H1 (cell line): ENCODE measurements at regions of chr7 and their contacts with region 1.

Region 1: GRCh38 chr7:134374291-134374690 is 57.6 kb upstream of the SLC35B4 start:
- DNase-seq: no peak
- H3K4me3 ChIP-seq: no peak overlapping the region
- H3K27ac ChIP-seq: no peak overlapping the region
- H3K4me1 ChIP-seq: no peaks in the 10 kb centered on the region
- H3K27me3 ChIP-seq: no peaks in the 10 kb centered on the region
- CTCF ChIP-seq: no peak
- EP300 ChIP-seq: no peak
- POLR2A ChIP-seq: no peak
- RAD21 ChIP-seq: no peak

Region 2: GRCh38 chr7:134234216-134234615 is 140.1 kb before region 1 on chr7:
- CTCF ChIA-PET with region 1: no interaction called
- POLR2A ChIA-PET with region 1: no interaction called
- DNase-seq: no peak
- H3K4me3 ChIP-seq: no peak overlapping the region
- H3K27ac ChIP-seq: no peak overlapping the region
- H3K4me1 ChIP-seq: no peaks in the 10 kb centered on the region
- H3K27me3 ChIP-seq: no peaks in the 10 kb centered on the region
- CTCF ChIP-seq: no peak
- EP300 ChIP-seq: no peak
- POLR2A ChIP-seq: no peak
- RAD21 ChIP-seq: no peak

Region 3: GRCh38 chr7:134254311-134254710 is 120.0 kb before region 1 on chr7:
- CTCF ChIA-PET with region 1: no interaction called
- POLR2A ChIA-PET with region 1: no interaction called
- DNase-seq: no peak
- H3K4me3 ChIP-seq: no peak overlapping the region
- H3K27ac ChIP-seq: no peak overlapping the region
- H3K4me1 ChIP-seq: no peaks in the 10 kb centered on the region
- H3K27me3 ChIP-seq: no peaks in the 10 kb centered on the region
- CTCF ChIP-seq: peak in 2 of 3 experiments; percentile 26 to 37; a peak in 3 of 4 replicates
- EP300 ChIP-seq: no peak
- POLR2A ChIP-seq: no peak
- RAD21 ChIP-seq: peak; percentile 67 to 76

Region 4: GRCh38 chr7:134388336-134389019 is 14.2 kb after region 1 on chr7:
- CTCF ChIA-PET with region 1: interaction called, 13 read pairs
- POLR2A ChIA-PET with region 1: no interaction called
- DNase-seq: no peak
- H3K4me3 ChIP-seq: no peak overlapping the region
- H3K27ac ChIP-seq: no peak overlapping the region
- H3K4me1 ChIP-seq: no peaks in the 10 kb centered on the region
- H3K27me3 ChIP-seq: no peaks in the 10 kb centered on the region
- CTCF ChIP-seq: no peak
- EP300 ChIP-seq: no peak
- POLR2A ChIP-seq: no peak
- RAD21 ChIP-seq: no peak